ENCODE measurements at regions of chr14 and their contacts with region 1.

Region 1: DNA sequence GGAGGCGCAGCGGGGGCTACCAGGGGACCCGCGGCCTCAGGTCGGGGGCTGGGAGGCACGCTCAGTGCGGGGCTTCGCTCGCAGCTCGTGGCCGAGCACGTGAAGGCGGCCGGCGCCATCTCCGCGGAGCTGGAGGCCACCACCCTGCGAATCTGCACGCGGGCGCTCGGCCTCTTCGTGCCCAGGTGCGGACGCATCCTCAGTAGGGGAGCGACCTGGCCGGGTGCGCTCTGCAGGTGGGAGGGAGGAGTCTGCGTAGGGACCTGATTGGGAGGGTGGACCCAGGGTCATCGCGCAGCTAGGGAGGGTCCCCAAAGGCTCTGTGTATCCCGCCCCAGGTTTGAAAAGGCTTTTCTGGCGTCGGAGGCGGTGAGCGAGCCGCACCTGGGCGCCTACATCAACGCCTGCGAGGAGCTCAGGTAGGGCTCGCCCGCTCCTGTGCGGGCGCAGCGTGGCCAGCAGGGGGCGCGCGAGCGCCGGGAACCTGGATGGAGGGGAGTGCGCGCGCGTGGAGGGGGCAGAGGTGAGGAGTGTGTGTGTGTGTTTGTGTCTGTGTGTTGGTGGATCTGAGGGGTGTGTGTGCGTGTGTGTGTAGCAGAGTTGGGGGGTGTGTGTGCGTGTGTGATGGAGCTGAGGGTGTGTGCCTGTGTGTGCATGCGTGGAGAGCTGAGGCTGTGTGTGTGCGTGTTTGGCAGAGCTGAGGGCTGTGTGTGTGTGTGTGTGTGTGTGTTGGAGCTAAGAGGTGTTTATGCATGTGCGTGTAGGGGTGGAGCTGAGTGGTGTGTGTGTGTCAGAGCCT is 10.3 kb downstream of the EXOC3L4 start:
- DNase-seq: peak; percentile 91
- H3K4me3 ChIP-seq: peak overlapping the region in 1 of 2 experiments; percentile 57; a peak in 1 of 4 replicates
- H3K27ac ChIP-seq: no peak overlapping the region
- H3K4me1 ChIP-seq: peaks cover 6 to 9% of the 10 kb centered on the region in 2 experiments; a peak in 3 of 4 replicates
- H3K27me3 ChIP-seq: peaks cover 25% of the 10 kb centered on the region
- CTCF ChIP-seq: peak; percentile 95
- EP300 ChIP-seq: no peak
- RAD21 ChIP-seq: peak; percentile 87

Region 2: DNA sequence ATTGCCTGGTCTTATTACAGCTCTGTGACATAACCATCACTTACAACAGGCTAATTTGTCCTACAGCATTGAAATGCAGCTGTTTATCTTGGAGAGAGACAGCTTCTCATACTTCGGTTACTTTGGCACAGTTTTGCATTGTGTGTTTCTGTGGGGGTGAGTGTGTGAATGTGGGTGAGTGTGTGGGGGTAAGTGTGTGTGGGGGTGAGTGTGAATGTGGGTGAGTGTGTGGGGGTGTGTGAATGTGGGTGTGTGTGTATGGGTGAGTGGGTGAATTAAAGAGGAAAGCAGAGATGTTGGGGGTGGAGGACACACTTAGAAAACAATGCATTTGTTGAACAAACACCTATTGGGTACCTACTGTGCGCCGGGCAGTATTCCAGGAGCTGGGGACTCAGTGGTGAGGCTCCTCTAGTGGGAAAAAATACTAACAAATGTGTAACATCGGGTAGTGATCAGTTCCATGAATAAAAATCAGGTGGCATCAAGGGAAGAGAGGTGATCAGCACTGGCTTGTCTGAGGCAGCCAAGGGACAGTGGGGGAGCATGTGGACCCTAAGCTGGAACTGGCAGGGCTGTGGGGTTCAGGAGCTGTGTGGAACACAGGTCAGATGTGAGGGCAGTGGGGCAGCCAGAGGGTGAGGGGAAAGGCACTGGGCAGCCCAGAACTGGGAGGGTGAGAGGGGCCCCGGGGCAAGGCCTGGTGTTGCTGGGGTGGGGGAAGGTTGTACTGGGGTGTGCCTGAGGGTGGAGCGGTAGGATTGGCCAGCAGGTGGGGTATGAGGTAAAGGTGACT is 226.5 kb before region 1 on chr14:
- CTCF ChIA-PET with region 1: no interaction called
- POLR2A ChIA-PET with region 1: no interaction called
- DNase-seq: no peak
- H3K4me3 ChIP-seq: no peak overlapping the region
- H3K27ac ChIP-seq: no peak overlapping the region
- H3K4me1 ChIP-seq: peaks cover 0 to 11% of the 10 kb centered on the region in 2 experiments; a peak in 2 of 4 replicates
- H3K27me3 ChIP-seq: no peaks in the 10 kb centered on the region
- CTCF ChIP-seq: no peak
- EP300 ChIP-seq: no peak
- RAD21 ChIP-seq: no peak

Region 3: GRCh38 chr14:103045371-103045869 is 59.4 kb before region 1 on chr14:
- CTCF ChIA-PET with region 1: no interaction called
- POLR2A ChIA-PET with region 1: no interaction called
- DNase-seq: no peak
- H3K4me3 ChIP-seq: no peak overlapping the region
- H3K27ac ChIP-seq: no peak overlapping the region
- H3K4me1 ChIP-seq: peaks cover 0 to 6% of the 10 kb centered on the region in 2 experiments; a peak in 1 of 4 replicates
- H3K27me3 ChIP-seq: no peaks in the 10 kb centered on the region
- CTCF ChIP-seq: no peak
- EP300 ChIP-seq: no peak
- RAD21 ChIP-seq: no peak

Region 4: GRCh38 chr14:103057365-103058096 is 47.3 kb before region 1 on chr14 and contains the start of gene CDC42BPB:
- CTCF ChIA-PET with region 1: interaction called, 10 read pairs
- POLR2A ChIA-PET with region 1: no interaction called
- DNase-seq: peak; percentile 98
- H3K4me3 ChIP-seq: peak within 1 kb of the TSS; percentile 91 to 99
- H3K27ac ChIP-seq: peak within 1 kb of the TSS; percentile 75 to 89
- H3K4me1 ChIP-seq: peaks cover 23 to 26% of the 10 kb centered on the region in 2 experiments; a peak in 3 of 4 replicates
- H3K27me3 ChIP-seq: no peaks in the 10 kb centered on the region
- CTCF ChIP-seq: no peak
- EP300 ChIP-seq: no peak
- RAD21 ChIP-seq: no peak
- polyA plus RNA-seq, gene CDC42BPB: 59.7 and 61.6 TPM in 2 replicates

Region 5: DNA sequence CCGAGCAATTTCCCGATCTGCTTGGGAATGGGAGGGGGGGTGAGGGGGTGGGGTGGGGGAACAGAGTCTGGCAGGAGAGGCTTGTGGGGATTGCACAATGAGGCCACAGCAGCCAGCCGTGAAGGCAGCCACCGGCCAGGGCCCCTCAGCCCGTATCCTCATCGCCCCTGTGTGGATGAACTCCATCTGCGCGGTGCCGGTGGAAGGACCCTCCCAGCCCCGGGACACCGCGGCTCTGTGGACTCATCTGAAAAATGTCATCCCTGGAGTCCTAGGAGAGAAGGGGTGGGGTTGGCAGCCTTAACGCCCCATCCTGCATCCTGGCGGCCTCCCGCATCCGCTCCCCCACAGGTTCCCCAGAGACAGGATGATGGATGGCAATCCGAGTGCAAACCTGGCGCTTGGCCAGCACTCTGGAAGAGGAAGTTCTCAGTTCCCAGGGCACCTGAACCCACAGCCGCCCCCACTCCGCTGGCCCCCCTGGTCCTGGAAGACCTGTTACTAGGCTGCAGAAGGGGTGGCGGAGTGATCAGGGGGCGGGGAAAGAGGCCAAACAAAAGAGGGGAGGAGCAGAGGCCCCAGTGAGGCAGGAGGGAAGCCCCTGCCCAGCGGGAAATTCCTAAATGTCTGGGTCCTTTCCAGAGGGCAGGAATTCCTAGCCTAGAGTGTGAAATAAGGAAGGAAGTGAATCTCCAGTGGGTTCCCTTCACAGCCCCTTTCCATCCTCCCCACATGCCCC is 17.2 kb after region 1 on chr14:
- CTCF ChIA-PET with region 1: interaction called, 132 read pairs
- POLR2A ChIA-PET with region 1: no interaction called
- DNase-seq: peak; percentile 86
- H3K4me3 ChIP-seq: 0 out of 4 replicates have a peak overlapping the region, but pooled peaks of 1 of the 2 experiments have one; percentile 9
- H3K27ac ChIP-seq: peak overlapping the region; percentile 27 to 69; a peak in 3 of 4 replicates
- H3K4me1 ChIP-seq: peaks cover 11 to 24% of the 10 kb centered on the region in 2 experiments
- H3K27me3 ChIP-seq: no peaks in the 10 kb centered on the region
- CTCF ChIP-seq: no peak
- EP300 ChIP-seq: peak in 1 of 2 experiments; percentile 75; a peak in 1 of 4 replicates
- RAD21 ChIP-seq: 0 out of 2 replicates have a peak, but pooled peaks have one; percentile 11

Region 6: GRCh38 chr14:103169954-103170353 is 65.1 kb after region 1 on chr14:
- CTCF ChIA-PET with region 1: interaction called, 32 read pairs
- POLR2A ChIA-PET with region 1: no interaction called
- DNase-seq: no peak
- H3K4me3 ChIP-seq: no peak overlapping the region; a peak in 1 of 4 replicates
- H3K27ac ChIP-seq: no peak overlapping the region
- H3K4me1 ChIP-seq: no peaks in the 10 kb centered on the region
- H3K27me3 ChIP-seq: no peaks in the 10 kb centered on the region
- CTCF ChIP-seq: no peak
- EP300 ChIP-seq: no peak
- RAD21 ChIP-seq: no peak

Region 7: GRCh38 chr14:103207388-103208072 is 102.7 kb after region 1 on chr14:
- CTCF ChIA-PET with region 1: interaction called, 21 read pairs
- POLR2A ChIA-PET with region 1: no interaction called
- DNase-seq: peak; percentile 79
- H3K4me3 ChIP-seq: peak overlapping the region in 1 of 2 experiments; percentile 37; a peak in 2 of 4 replicates
- H3K27ac ChIP-seq: no peak overlapping the region
- H3K4me1 ChIP-seq: peaks cover 0 to 2% of the 10 kb centered on the region in 2 experiments; a peak in 1 of 4 replicates
- H3K27me3 ChIP-seq: no peaks in the 10 kb centered on the region
- CTCF ChIP-seq: no peak
- EP300 ChIP-seq: no peak
- RAD21 ChIP-seq: no peak

Region 8: GRCh38 chr14:103292426-103293374 is 187.8 kb after region 1 on chr14:
- CTCF ChIA-PET with region 1: interaction called, 250 read pairs
- POLR2A ChIA-PET with region 1: no interaction called
- DNase-seq: peak; percentile 88
- H3K4me3 ChIP-seq: peak overlapping the region in 1 of 2 experiments; percentile 52; a peak in 1 of 4 replicates
- H3K27ac ChIP-seq: no peak overlapping the region
- H3K4me1 ChIP-seq: peaks cover 0 to 3% of the 10 kb centered on the region in 2 experiments; a peak in 1 of 4 replicates
- H3K27me3 ChIP-seq: no peaks in the 10 kb centered on the region; the same call in 1 of the 2 replicates
- CTCF ChIP-seq: peak; percentile 93
- EP300 ChIP-seq: no peak
- RAD21 ChIP-seq: peak; percentile 97